Gastrocnemius medialis (tissue), 4 donors: ENCODE measurements at regions of chr14 and their contacts with region 1.

Region 1: GRCh38 chr14:70416725-70417349 is at the start of gene SYNJ2BP:
- DNase-seq: peak; percentile 54 to 82
- ATAC-seq: peak; percentile 97 to 99
- H3K4me3 ChIP-seq: peak within 1 kb of the TSS; percentile 63 to 93 (median 80)
- H3K27ac ChIP-seq: peak within 1 kb of the TSS; percentile 69 to 85 (median 82)
- H3K4me1 ChIP-seq: peaks cover 13 to 19% of the 10 kb centered on the region in 2 donors
- H3K27me3 ChIP-seq: no peaks in the 10 kb centered on the region
- CTCF ChIP-seq: no peak
- POLR2A ChIP-seq: no peak
- total RNA-seq, gene SYNJ2BP: 21.2 to 34.1 (median 27.1) TPM

Region 2: GRCh38 chr14:70359181-70360090 is 57.4 kb before region 1 on chr14 and contains the start of gene COX16:
- in situ Hi-C with region 1: no loop called
- intact Hi-C with region 1: loop called (anchors 5 kb)
- DNase-seq: peak; percentile 70 to 81
- ATAC-seq: peak; percentile 100
- H3K4me3 ChIP-seq: peak within 1 kb of the TSS; percentile 76 to 91 (median 84)
- H3K27ac ChIP-seq: peak within 1 kb of the TSS; percentile 83 to 91 (median 88)
- H3K4me1 ChIP-seq: peaks cover 43% of the 10 kb centered on the region in 2 donors
- H3K27me3 ChIP-seq: no peaks in the 10 kb centered on the region
- CTCF ChIP-seq: peak in 1 of 5 experiments; percentile 9
- POLR2A ChIP-seq: peak in 1 of 2 donors; percentile 27
- total RNA-seq, gene COX16: 16.8 to 38.6 (median 26.7) TPM